ENCODE measurements at regions of chr16 and their contacts with region 1.

Region 1: GRCh38 chr16:66872943-66873684 is 7.2 kb upstream of the PDP2 start:
- DNase-seq: peak; percentile 91
- ATAC-seq: peak; percentile 90
- H3K4me3 ChIP-seq: peak overlapping the region in 4 of 5 experiments; percentile 32 to 45 (median 44)
- H3K4me3 Mint-ChIP-seq: peak overlapping the region; percentile 77
- H3K27ac ChIP-seq: no peak overlapping the region
- H3K27ac Mint-ChIP-seq: peak overlapping the region; percentile 72
- H3K4me1 ChIP-seq: peaks cover 7 to 11% of the 10 kb centered on the region in 2 donors
- H3K4me1 Mint-ChIP-seq: peaks cover 14% of the 10 kb centered on the region
- H3K27me3 ChIP-seq: peaks cover 0 to 1% (median 0%) of the 10 kb centered on the region in 4 experiments
- H3K27me3 Mint-ChIP-seq: peaks cover 3% of the 10 kb centered on the region
- CTCF ChIP-seq: peak; percentile 92

Region 2: GRCh38 chr16:66357153-66357928 is 515.8 kb before region 1 on chr16:
- CTCF ChIA-PET with region 1: interaction called, 10 read pairs
- POLR2A ChIA-PET with region 1: no interaction called
- intact Hi-C with region 1: no loop called
- DNase-seq: peak; percentile 41
- ATAC-seq: no peak
- H3K4me3 ChIP-seq: no peak overlapping the region
- H3K4me3 Mint-ChIP-seq: no peak overlapping the region
- H3K27ac ChIP-seq: no peak overlapping the region
- H3K27ac Mint-ChIP-seq: no peak overlapping the region
- H3K4me1 ChIP-seq: no peaks in the 10 kb centered on the region
- H3K4me1 Mint-ChIP-seq: peaks cover 2% of the 10 kb centered on the region
- H3K27me3 ChIP-seq: peaks cover 0 to 44% (median 3%) of the 10 kb centered on the region in 4 experiments
- H3K27me3 Mint-ChIP-seq: peaks cover 44% of the 10 kb centered on the region
- CTCF ChIP-seq: peak; percentile 67

Region 3: DNA sequence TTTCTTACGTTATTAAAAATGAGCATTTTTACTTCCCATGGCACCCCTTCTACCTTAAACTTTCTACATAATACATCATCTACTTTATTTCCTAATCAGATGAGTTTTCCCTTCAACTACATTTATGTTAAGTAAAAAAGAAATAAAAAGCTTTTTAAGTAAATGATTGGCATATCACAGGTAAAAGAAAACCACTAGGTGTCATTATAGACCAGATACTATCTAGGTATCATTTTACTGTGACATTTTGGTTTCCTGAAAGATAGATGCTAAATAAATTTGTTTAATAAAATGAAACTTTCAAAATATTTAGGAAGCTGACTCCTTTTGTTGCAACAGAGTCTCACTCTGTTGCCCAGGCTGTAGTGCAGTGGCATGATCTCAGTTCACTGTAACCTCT is 310.7 kb before region 1 on chr16:
- CTCF ChIA-PET with region 1: interaction called, 15 read pairs
- POLR2A ChIA-PET with region 1: no interaction called
- intact Hi-C with region 1: loop called (anchors 5 kb)
- DNase-seq: no peak
- ATAC-seq: no peak
- H3K4me3 ChIP-seq: no peak overlapping the region
- H3K4me3 Mint-ChIP-seq: no peak overlapping the region
- H3K27ac ChIP-seq: no peak overlapping the region
- H3K27ac Mint-ChIP-seq: no peak overlapping the region
- H3K4me1 ChIP-seq: no peaks in the 10 kb centered on the region
- H3K4me1 Mint-ChIP-seq: peaks cover 22% of the 10 kb centered on the region
- H3K27me3 ChIP-seq: no peaks in the 10 kb centered on the region
- H3K27me3 Mint-ChIP-seq: no peaks in the 10 kb centered on the region
- CTCF ChIP-seq: peak; percentile 48

Region 4: DNA sequence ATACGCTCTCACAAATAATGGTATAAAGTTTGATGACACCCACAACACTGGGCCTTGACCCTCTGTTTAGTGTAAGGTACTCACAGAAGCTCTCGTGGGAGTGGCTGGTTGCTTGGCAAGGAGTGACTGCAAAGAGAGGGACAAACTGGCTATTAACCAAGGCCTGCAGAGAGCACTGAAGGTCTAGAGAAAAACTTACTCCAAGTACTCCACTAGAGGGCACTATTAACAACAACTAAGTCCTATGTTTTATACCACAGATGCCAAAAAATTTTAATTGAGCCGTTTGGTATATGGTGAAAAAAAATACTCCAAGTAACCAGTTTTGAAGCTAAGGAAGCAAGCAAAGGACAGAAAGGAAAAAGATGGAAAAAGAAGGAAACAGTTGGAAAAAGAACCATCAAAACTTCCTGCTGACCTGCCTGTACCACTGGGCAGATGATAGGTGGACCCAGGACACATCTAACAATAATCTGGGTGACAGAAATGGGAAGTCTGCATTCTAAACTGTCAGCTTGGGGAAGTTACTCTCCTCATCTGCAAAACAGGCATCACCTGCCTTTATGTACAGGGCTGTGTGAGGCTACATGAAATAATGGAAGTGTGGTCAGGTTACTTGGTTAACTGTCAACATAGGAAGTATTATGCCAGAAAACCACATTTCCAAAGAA is 144.9 kb before region 1 on chr16:
- CTCF ChIA-PET with region 1: interaction called, 11 read pairs
- POLR2A ChIA-PET with region 1: no interaction called
- intact Hi-C with region 1: loop called (anchors 1 kb)
- DNase-seq: peak; percentile 60
- ATAC-seq: peak; percentile 57
- H3K4me3 ChIP-seq: no peak overlapping the region
- H3K4me3 Mint-ChIP-seq: no peak overlapping the region
- H3K27ac ChIP-seq: no peak overlapping the region
- H3K27ac Mint-ChIP-seq: no peak overlapping the region
- H3K4me1 ChIP-seq: no peaks in the 10 kb centered on the region
- H3K4me1 Mint-ChIP-seq: peaks cover 3% of the 10 kb centered on the region
- H3K27me3 ChIP-seq: no peaks in the 10 kb centered on the region
- H3K27me3 Mint-ChIP-seq: no peaks in the 10 kb centered on the region
- CTCF ChIP-seq: peak; percentile 83

Region 5: GRCh38 chr16:66830422-66831404 is 42.4 kb before region 1 on chr16 and contains the start of gene NAE1:
- CTCF ChIA-PET with region 1: interaction called, 58 read pairs
- POLR2A ChIA-PET with region 1: interaction called, 3 read pairs
- intact Hi-C with region 1: loop called (anchors 2 kb)
- DNase-seq: peak; percentile 95
- ATAC-seq: peak; percentile 98
- H3K4me3 ChIP-seq: peak within 1 kb of the TSS; percentile 57 to 87 (median 79)
- H3K4me3 Mint-ChIP-seq: peak within 1 kb of the TSS; percentile 77
- H3K27ac ChIP-seq: peak within 1 kb of the TSS in 1 of 2 donors; percentile 76
- H3K27ac Mint-ChIP-seq: peak within 1 kb of the TSS; percentile 67
- H3K4me1 ChIP-seq: peaks cover 10 to 22% of the 10 kb centered on the region in 2 donors
- H3K4me1 Mint-ChIP-seq: peaks cover 25% of the 10 kb centered on the region
- H3K27me3 ChIP-seq: peaks cover 0 to 3% (median 0%) of the 10 kb centered on the region in 4 experiments
- H3K27me3 Mint-ChIP-seq: peaks cover 5% of the 10 kb centered on the region
- CTCF ChIP-seq: peak; percentile 99
- total RNA-seq, gene NAE1: 57.6 and 62.5 TPM in 2 replicates

Region 6: GRCh38 chr16:66850115-66850815 is 22.8 kb before region 1 on chr16:
- CTCF ChIA-PET with region 1: interaction called, 29 read pairs
- POLR2A ChIA-PET with region 1: no interaction called
- intact Hi-C with region 1: no loop called
- DNase-seq: no peak
- ATAC-seq: no peak
- H3K4me3 ChIP-seq: no peak overlapping the region
- H3K4me3 Mint-ChIP-seq: no peak overlapping the region
- H3K27ac ChIP-seq: no peak overlapping the region
- H3K27ac Mint-ChIP-seq: no peak overlapping the region
- H3K4me1 ChIP-seq: peaks cover 5 to 7% of the 10 kb centered on the region in 2 donors
- H3K4me1 Mint-ChIP-seq: peaks cover 7% of the 10 kb centered on the region
- H3K27me3 ChIP-seq: peaks cover 0 to 20% (median 5%) of the 10 kb centered on the region in 4 experiments
- H3K27me3 Mint-ChIP-seq: peaks cover 25% of the 10 kb centered on the region
- CTCF ChIP-seq: no peak

Region 7: DNA sequence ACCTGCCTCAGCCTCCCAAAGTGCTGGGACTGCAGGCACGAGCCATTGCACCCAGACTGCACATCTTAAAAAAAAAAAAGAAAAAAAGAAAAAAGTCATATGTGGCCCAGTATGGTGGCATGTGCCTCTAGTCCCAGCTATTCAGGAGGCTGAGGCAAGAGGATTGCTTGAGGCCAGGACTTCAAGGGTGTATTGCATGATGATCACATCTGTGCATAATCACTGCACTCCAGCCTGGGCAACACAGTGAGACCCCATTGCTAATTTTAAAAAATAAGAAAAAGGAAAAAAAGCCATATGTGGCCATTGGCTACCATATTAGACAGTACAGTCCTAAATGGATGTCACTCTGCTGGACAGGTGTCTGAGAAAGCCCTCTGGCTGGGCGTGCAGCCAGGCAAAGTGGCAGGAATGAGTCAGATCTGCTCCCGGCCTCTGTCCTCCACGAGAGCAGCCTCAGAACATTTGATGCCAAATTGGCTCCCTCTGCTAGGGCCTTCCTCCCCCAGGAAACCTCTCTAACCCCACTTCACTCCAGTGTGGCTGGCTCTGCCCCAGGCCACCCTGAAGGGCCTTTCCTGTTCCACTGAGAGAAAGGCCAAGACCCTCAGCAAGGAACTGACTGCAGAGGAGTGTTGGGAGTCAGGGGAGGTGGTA is 14.2 kb before region 1 on chr16:
- CTCF ChIA-PET with region 1: interaction called, 29 read pairs
- POLR2A ChIA-PET with region 1: no interaction called
- intact Hi-C with region 1: no loop called
- DNase-seq: no peak
- ATAC-seq: no peak
- H3K4me3 ChIP-seq: no peak overlapping the region
- H3K4me3 Mint-ChIP-seq: no peak overlapping the region
- H3K27ac ChIP-seq: no peak overlapping the region
- H3K27ac Mint-ChIP-seq: no peak overlapping the region
- H3K4me1 ChIP-seq: no peaks in the 10 kb centered on the region
- H3K4me1 Mint-ChIP-seq: no peaks in the 10 kb centered on the region
- H3K27me3 ChIP-seq: no peaks in the 10 kb centered on the region
- H3K27me3 Mint-ChIP-seq: no peaks in the 10 kb centered on the region
- CTCF ChIP-seq: no peak